Activated CD4-positive, alpha-beta T cell treated with anti-CD3 and anti-CD28 coated beads for 36 hours (primary cell): ENCODE measurements at regions of chr2 and their contacts with region 1.

Region 1: GRCh38 chr2:84865181-84865783 is 15.6 kb downstream of the TRABD2A start:
- DNase-seq: no peak
- ATAC-seq: peak; percentile 46
- H3K4me3 Mint-ChIP-seq: no peak overlapping the region
- H3K27ac Mint-ChIP-seq: peak overlapping the region; percentile 70
- H3K4me1 Mint-ChIP-seq: peaks cover 82% of the 10 kb centered on the region
- H3K27me3 Mint-ChIP-seq: no peaks in the 10 kb centered on the region

Region 2: DNA sequence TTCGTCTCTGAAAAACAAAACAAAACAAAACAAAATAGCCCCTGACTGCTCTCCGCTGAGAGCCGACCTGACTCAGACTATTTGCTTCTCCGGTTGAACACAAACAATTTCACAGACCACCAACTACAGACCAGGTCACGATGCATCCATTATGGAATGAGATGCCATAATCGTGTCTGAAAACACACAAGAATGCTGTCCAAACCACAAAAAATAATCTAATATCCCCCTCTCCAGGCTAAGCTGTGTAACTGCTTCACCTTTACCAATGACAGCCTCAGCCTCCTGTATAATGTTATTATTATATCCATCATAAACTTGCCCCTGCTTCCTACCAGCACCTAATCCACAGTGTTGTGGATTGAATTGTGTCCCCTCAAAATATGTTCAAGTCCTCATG is 234.2 kb before region 1 on chr2:
- CTCF ChIA-PET with region 1: no interaction called
- POLR2A ChIA-PET with region 1: no interaction called
- intact Hi-C with region 1: loop called in 1 of 2 experiments (anchors 5 kb)
- DNase-seq: no peak
- ATAC-seq: peak; percentile 74
- H3K4me3 Mint-ChIP-seq: no peak overlapping the region
- H3K27ac Mint-ChIP-seq: no peak overlapping the region
- H3K4me1 Mint-ChIP-seq: peaks cover 16% of the 10 kb centered on the region
- H3K27me3 Mint-ChIP-seq: no peaks in the 10 kb centered on the region

Region 3: DNA sequence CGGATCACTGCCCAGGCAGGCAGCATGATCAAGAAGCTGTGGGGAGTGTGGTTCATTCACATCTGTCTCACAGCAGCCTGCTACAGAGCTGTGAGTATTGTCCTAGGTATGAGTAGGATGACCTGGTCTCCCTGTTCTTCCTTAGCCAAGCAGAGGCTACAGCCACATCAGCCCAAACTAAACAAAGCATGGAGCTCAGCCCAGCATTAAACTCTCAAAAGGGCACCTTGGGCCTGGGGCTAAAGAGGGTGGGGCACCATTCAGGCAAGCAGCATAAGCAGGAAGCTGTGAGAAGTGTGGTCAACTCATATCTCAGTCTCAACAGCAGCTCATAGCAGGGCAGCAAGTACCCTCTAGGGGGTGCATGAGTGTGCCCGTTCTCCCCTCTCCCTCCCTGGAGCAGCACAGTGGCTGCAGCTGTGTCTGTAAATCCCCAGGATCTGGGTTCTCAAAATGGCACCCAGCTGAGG is 124.0 kb before region 1 on chr2:
- CTCF ChIA-PET with region 1: interaction called, 5 read pairs
- POLR2A ChIA-PET with region 1: no interaction called
- intact Hi-C with region 1: loop called (anchors 1 to 2 kb)
- DNase-seq: peak; percentile 70
- ATAC-seq: peak; percentile 100
- H3K4me3 Mint-ChIP-seq: no peak overlapping the region
- H3K27ac Mint-ChIP-seq: no peak overlapping the region
- H3K4me1 Mint-ChIP-seq: peaks cover 11% of the 10 kb centered on the region
- H3K27me3 Mint-ChIP-seq: no peaks in the 10 kb centered on the region

Region 4: DNA sequence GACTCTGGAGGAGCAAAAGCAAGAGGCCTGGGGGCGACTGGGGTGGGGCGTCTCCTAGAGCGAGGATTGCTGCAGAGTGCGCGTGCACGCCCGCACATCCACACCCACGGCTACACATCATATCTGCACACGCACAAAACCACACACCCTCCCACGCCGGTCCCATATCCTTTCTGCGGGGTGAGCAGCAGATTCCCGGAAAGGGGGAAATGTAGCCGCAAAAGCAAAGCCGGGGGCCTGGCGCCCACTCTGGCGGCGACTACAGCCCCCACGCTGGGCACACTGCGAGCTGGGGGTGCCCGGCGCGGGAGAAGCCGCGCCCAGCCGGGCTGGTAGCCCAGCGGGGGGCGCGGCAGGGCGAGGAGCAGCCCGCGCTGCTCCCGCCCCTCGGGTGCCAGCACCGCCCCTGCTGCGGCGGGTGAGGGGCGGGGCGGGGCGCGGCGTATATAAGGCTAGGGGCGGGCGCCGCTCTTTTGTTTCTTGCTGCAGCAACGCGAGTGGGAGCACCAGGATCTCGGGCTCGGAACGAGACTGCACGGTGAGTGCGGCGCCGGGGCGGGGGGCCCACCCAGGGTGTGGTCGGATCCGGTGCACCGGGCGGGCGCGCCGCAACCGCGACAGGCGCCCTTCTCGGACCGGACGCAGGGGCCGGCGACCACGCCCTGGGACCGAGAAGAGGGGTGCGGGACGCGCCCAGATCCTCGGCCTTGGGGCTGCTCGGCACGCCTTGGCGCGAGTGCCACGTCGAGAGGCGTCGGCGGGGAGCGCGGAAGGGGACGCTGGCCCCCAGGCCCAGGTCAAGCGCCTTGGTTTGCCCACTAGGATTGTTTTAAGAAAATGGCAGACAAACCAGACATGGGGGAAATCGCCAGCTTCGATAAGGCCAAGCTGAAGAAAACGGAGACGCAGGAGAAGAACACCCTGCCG is 40.2 kb after region 1 on chr2 and contains the start of gene TMSB10:
- CTCF ChIA-PET with region 1: no interaction called
- POLR2A ChIA-PET with region 1: no interaction called
- intact Hi-C with region 1: no loop called
- DNase-seq: peak; percentile 93
- ATAC-seq: peak; percentile 69
- H3K4me3 Mint-ChIP-seq: peak within 1 kb of the TSS; percentile 96
- H3K27ac Mint-ChIP-seq: peak within 1 kb of the TSS; percentile 89
- H3K4me1 Mint-ChIP-seq: peaks cover 57% of the 10 kb centered on the region
- H3K27me3 Mint-ChIP-seq: no peaks in the 10 kb centered on the region
- total RNA-seq, gene TMSB10: 2,345 to 2,742 TPM